Activated CD4-positive, alpha-beta T cell treated with anti-CD3 and anti-CD28 coated beads, Interleukin-2, amount 10 ng/mL, durations not matched to agents 24 days and 14 days (primary cell): ENCODE measurements at regions of chr9 and their contacts with region 1.

Region 1: GRCh38 chr9:92954049-92954861 is 6.9 kb downstream of the FGD3 start:
- DNase-seq: peak; percentile 92
- H3K4me3 Mint-ChIP-seq: peak overlapping the region; percentile 73
- H3K27ac Mint-ChIP-seq: peak overlapping the region; percentile 92
- H3K4me1 Mint-ChIP-seq: peaks cover 38% of the 10 kb centered on the region
- H3K27me3 Mint-ChIP-seq: peaks cover 3% of the 10 kb centered on the region

Region 2: DNA sequence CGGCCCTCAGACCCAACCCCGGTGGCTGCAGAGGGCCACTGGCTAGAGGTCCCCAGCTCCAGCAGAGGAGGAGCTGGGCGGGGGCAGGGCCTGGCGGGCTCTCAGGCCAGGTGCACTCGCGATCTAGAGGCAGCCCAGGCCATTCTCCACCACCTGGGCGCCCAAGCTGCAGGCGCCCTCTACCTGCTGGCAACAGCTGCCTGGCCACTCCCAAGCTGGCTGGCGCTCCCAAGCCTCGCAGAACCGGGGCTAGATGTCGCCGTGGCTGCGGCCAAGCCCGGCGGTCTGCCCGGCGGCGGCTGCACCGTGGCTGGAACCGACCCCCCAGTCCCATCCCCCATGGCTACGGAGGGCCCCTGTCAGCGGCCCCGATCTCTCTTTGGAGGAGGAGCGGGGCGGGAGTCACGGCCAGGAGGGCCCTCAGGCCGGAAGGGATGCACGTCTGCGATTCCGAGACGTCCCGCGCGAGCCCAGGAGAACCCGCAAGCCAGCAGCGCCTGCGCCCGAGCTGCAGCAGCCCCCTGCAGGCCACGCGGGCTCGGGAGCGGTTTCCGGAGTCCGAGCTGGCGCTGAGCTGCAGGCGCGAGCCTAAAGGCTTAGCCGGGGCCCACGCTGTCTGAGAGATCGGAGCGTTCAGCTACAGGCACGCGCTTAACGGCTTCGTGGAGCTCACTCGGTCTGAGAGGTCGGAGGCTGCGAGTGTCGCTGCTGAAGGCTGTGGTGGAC is 145.4 kb before region 1 on chr9:
- intact Hi-C with region 1: loop called (anchors 10 kb)
- DNase-seq: peak; percentile 89
- H3K4me3 Mint-ChIP-seq: peak overlapping the region; percentile 92
- H3K27ac Mint-ChIP-seq: peak overlapping the region; percentile 59
- H3K4me1 Mint-ChIP-seq: peaks cover 13% of the 10 kb centered on the region
- H3K27me3 Mint-ChIP-seq: peaks cover 60% of the 10 kb centered on the region

Region 3: DNA sequence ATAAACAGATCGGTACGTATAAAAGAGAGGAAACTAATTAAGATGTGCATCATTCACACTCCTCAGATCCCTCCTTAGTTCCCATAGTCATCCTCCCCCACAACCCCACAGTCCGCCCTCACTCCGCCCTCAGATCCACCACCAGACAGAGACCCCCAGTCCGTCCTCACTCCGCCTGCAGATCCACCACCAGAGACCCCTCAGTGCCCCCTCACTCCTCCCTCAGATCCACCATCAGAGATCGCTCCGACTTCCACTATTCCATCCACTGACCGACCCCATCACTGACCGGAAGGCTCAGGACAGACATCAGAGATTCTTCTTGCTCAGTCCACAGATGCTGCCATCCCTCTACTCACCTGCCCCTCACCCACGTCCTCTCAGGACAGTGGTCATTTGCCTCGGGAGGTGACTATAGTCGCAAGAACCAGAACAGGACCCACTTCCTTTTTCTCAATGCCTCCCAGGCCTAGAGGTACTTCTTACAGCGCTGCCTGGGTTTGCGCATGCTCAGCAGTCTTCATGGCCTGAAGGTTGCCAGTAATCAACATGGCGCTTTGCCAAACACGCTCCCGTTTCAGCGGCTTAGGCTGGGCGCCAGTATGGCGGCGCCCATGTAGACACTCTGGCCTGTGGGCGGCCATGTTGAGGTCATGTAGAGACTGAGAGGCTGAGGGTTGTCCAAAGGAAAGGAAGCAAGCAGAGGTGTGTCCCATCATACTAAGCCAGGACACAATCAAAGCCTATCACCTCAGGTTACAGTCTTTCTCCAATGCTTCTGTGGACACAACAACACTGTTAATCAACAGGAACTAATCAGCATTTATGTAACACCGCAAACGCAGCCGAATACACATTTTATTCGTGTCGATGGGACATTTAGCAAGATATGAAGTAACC is 76.5 kb before region 1 on chr9 and contains the start of gene ZNF484:
- intact Hi-C with region 1: loop called (anchors 5 kb)
- DNase-seq: peak; percentile 98
- H3K4me3 Mint-ChIP-seq: peak within 1 kb of the TSS; percentile 98
- H3K27ac Mint-ChIP-seq: peak within 1 kb of the TSS; percentile 95
- H3K4me1 Mint-ChIP-seq: peaks cover 33% of the 10 kb centered on the region
- H3K27me3 Mint-ChIP-seq: no peaks in the 10 kb centered on the region
- total RNA-seq, gene ZNF484: 7.3 and 7.7 TPM in 2 replicates

Region 4: GRCh38 chr9:93003552-93004407 is 49.5 kb after region 1 on chr9:
- intact Hi-C with region 1: loop called (anchors 1 kb)
- DNase-seq: peak; percentile 89
- H3K4me3 Mint-ChIP-seq: peak overlapping the region; percentile 42
- H3K27ac Mint-ChIP-seq: peak overlapping the region; percentile 85
- H3K4me1 Mint-ChIP-seq: peaks cover 37% of the 10 kb centered on the region
- H3K27me3 Mint-ChIP-seq: no peaks in the 10 kb centered on the region

Region 5: DNA sequence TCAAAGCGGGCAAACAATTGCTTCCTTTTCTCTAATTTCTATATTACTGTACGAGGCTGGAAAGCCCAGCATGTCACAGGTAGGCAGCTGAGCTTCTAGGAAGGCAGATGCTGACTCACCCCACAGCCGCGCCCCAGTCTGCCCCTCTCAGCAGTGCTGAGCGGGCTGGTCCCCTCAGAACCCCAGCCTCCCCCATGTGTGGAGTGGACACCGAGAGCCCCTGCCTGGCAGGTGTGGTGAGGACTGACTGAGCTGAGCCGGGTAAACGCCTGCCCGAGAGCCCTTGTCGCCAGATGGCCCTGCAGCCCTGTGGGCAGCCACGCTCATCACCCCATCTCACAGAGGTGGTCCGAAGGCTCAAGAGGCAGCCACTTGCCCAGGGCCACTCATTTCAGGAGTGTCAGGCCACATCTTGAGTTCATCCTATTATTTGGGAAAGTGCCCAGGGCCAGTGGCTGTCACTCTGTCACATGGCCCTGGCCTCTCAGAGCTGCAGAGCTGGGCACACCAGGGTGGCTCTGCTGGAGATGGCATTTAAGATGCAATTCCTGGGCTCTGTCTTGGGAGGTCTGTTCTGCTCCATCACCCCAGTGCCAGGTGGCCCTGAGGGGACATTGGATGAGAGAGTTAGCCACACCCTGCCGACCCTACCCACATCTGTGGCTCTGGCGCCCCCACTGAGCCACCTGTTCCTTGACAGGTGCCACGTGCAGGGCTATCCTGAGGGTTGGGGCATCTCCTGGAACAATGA is 154.2 kb after region 1 on chr9:
- intact Hi-C with region 1: no loop called
- DNase-seq: peak; percentile 81
- H3K4me3 Mint-ChIP-seq: peak overlapping the region; percentile 55
- H3K27ac Mint-ChIP-seq: peak overlapping the region; percentile 81
- H3K4me1 Mint-ChIP-seq: peaks cover 41% of the 10 kb centered on the region
- H3K27me3 Mint-ChIP-seq: no peaks in the 10 kb centered on the region

Region 6: GRCh38 chr9:93302551-93303257 is 348.4 kb after region 1 on chr9:
- intact Hi-C with region 1: loop called (anchors 10 kb)
- DNase-seq: peak; percentile 85
- H3K4me3 Mint-ChIP-seq: no peak overlapping the region
- H3K27ac Mint-ChIP-seq: no peak overlapping the region
- H3K4me1 Mint-ChIP-seq: peaks cover 6% of the 10 kb centered on the region
- H3K27me3 Mint-ChIP-seq: no peaks in the 10 kb centered on the region